ENCODE measurements at regions of chr7 and their contacts with region 1.

Region 1: DNA sequence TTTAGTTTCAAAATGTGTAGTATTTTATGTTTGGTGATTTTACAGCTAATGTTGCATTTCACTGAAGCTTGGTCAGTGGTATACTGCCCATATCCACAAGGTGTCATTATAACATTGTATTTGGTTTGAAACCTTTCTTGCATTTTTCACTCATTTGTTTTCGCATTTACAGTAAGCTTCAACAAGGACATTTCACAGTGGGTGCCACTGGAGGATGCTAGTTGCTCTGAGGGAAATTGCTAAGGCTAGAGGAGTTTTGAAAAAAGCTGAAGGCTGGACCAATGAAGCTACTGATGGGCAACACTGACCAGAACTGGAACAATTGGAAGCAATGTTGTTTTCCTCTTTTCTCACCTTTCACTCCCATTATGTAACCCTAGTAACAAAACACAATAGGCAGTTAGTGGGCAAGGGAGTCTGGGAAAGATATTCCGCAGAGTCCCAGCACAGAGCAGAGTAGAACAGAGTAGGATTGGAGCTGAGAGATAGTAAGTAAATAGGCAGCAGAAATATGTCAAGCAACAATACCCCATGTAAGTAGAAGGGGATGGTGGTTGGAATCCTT is 23.6 kb upstream of the SRI start:
- DNase-seq: peak; percentile 63 to 82
- H3K4me3 ChIP-seq: no peak overlapping the region
- H3K27ac ChIP-seq: no peak overlapping the region
- H3K4me1 ChIP-seq: peaks cover 9% of the 10 kb centered on the region; the same call in 1 of the 2 replicates
- H3K27me3 ChIP-seq: no peaks in the 10 kb centered on the region
- CTCF ChIP-seq: peak; percentile 91

Region 2: DNA sequence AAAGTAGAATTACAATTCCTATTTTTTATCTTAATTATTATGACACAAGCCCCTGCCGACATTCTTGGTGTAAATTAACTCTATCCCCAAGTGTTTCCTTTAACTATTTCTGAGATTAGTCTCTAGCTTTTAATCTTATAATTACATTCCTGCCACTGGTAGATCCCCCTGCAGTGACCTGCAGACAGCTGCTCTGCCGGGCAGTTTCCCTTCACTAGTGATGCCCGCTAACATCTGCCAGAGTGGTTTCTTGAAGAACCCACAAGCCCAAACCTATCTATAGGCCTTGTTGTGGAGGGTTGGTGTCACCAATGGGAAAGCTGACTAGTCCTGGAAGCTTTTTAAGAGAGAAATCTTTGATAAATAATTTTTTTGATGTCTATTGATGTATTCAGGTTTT is 259.3 kb before region 1 on chr7:
- CTCF ChIA-PET with region 1: no interaction called
- POLR2A ChIA-PET with region 1: no interaction called
- intact Hi-C with region 1: no loop called
- DNase-seq: no peak
- H3K4me3 ChIP-seq: no peak overlapping the region
- H3K27ac ChIP-seq: no peak overlapping the region
- H3K4me1 ChIP-seq: no peaks in the 10 kb centered on the region
- H3K27me3 ChIP-seq: no peaks in the 10 kb centered on the region
- CTCF ChIP-seq: no peak

Region 3: GRCh38 chr7:88254716-88255115 is 11.3 kb after region 1 on chr7:
- CTCF ChIA-PET with region 1: interaction called, 24 read pairs
- POLR2A ChIA-PET with region 1: interaction called, 11 read pairs
- intact Hi-C with region 1: no loop called
- DNase-seq: peak; percentile 89 to 95
- H3K4me3 ChIP-seq: peak overlapping the region; percentile 23; the same call in 1 of the 2 replicates
- H3K27ac ChIP-seq: peak overlapping the region; percentile 88
- H3K4me1 ChIP-seq: peaks cover 56% of the 10 kb centered on the region
- H3K27me3 ChIP-seq: no peaks in the 10 kb centered on the region
- CTCF ChIP-seq: no peak

Region 4: DNA sequence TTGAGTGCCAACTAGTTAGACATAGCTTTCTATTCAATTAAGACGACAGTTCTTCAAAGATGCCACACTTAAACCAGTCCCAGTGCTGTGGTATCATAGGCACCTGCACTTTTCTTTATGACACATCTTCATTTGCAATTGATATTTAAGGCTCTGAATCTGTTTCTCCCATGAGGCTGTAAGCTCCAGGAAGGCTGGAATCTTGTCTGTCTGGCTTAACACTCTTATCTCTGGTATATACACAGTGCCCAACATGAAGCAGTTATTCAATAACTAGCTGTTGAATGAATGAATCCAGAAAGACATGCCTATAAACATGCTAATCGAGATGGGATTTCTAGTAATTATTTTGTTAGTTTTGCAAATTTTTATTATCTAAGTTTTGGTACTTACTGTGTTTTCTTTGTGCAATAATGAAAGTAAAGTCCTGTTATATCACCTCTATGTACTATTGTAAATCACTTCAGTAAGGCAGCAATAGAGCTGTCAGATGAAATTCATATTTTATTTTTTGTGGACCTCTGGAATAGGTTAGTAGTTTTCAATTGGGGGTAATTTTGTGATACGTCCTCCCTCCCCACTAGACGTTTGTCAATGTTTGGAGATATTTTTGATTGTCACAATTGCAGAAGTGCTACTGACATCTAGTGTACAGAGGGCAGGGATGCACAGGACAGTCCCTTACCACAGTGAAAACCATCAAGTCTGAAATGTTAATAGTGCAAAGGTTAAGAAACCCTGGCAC is 114.5 kb after region 1 on chr7:
- CTCF ChIA-PET with region 1: interaction called, 52 read pairs
- POLR2A ChIA-PET with region 1: no interaction called
- intact Hi-C with region 1: loop called (anchors 1 kb)
- DNase-seq: no peak
- H3K4me3 ChIP-seq: no peak overlapping the region
- H3K27ac ChIP-seq: no peak overlapping the region
- H3K4me1 ChIP-seq: peaks cover 15% of the 10 kb centered on the region
- H3K27me3 ChIP-seq: no peaks in the 10 kb centered on the region
- CTCF ChIP-seq: peak; percentile 70

Region 5: GRCh38 chr7:88429382-88429781 is 186.0 kb after region 1 on chr7:
- CTCF ChIA-PET with region 1: no interaction called
- POLR2A ChIA-PET with region 1: no interaction called
- intact Hi-C with region 1: loop called (anchors 5 kb)
- DNase-seq: peak in 1 of 2 experiments; percentile 67
- H3K4me3 ChIP-seq: no peak overlapping the region
- H3K27ac ChIP-seq: no peak overlapping the region
- H3K4me1 ChIP-seq: peaks cover 8% of the 10 kb centered on the region; the same call in 1 of the 2 replicates
- H3K27me3 ChIP-seq: no peaks in the 10 kb centered on the region
- CTCF ChIP-seq: peak; percentile 53; the same call in 1 of the 2 replicates

Region 6: DNA sequence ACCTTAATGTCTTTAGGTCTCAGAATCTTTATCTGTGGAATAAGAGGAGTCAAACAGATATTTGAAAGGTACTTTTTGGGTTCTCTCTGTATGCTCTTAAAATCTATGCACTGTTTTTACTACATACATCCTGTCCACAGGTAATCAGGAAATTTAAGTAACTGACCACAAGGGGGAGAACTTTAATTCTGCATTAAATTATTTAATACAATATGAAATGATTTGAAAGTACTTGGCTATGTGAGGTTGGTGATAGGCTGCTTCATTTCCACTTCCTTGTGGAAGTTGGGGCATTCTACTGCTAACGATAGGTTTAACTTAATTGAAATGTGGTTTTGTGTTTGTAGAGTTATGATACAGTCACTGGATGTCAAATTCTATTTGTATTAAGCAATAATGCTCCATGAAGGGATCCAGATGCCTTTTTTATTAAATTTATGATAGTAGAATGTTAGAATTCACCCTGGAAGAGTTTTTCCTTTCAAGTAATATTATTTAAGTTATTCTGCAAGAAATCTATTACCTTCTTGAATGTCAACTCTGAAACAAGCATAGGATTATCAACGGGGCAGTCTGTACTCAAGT is 546.1 kb after region 1 on chr7:
- CTCF ChIA-PET with region 1: no interaction called
- POLR2A ChIA-PET with region 1: no interaction called
- intact Hi-C with region 1: loop called (anchors 5 kb)
- DNase-seq: no peak
- H3K4me3 ChIP-seq: no peak overlapping the region
- H3K27ac ChIP-seq: no peak overlapping the region
- H3K4me1 ChIP-seq: no peaks in the 10 kb centered on the region
- H3K27me3 ChIP-seq: no peaks in the 10 kb centered on the region
- CTCF ChIP-seq: peak; percentile 74

Region 7: GRCh38 chr7:89622838-89623672 is 1379.6 kb after region 1 on chr7:
- CTCF ChIA-PET with region 1: interaction called, 8 read pairs
- POLR2A ChIA-PET with region 1: no interaction called
- intact Hi-C with region 1: loop called (anchors 2 kb)
- DNase-seq: peak in 1 of 2 experiments; percentile 12
- H3K4me3 ChIP-seq: no peak overlapping the region
- H3K27ac ChIP-seq: no peak overlapping the region
- H3K4me1 ChIP-seq: no peaks in the 10 kb centered on the region
- H3K27me3 ChIP-seq: no peaks in the 10 kb centered on the region
- CTCF ChIP-seq: peak; percentile 75

Measured in PC-9 (cell line).